Mammary epithelial cell (primary cell): ENCODE measurements at regions of chr4 and their contacts with region 1.

Region 1: GRCh38 chr4:96993560-96993959 is 1149.7 kb downstream of the STPG2 start:
- DNase-seq: no peak
- H3K4me3 ChIP-seq: no peak overlapping the region
- H3K27ac ChIP-seq: no peak overlapping the region
- H3K4me1 ChIP-seq: no peaks in the 10 kb centered on the region
- H3K27me3 ChIP-seq: no peaks in the 10 kb centered on the region
- CTCF ChIP-seq: no peak

Region 2: DNA sequence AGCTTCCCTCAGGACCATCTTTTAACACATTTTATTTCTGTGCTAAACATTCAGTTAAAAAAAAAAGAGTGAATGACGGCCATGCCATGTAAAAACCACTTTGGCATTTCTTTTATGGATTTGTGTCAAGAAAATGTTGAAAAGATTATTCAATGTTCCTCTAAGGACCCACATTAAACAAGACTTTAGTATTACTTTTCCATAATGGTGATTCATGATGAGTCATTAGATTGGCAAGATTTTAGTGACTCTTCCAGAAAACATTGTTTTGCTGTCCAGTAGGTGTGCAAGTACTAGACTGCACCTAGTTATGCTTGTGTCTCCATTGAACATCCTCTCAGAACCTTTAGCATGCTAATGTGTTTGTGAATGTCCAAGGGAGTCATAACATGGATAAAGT is 401.1 kb after region 1 on chr4:
- CTCF ChIA-PET with region 1: no interaction called
- dilution Hi-C with region 1: no loop called
- in situ Hi-C with region 1: no loop called
- intact Hi-C with region 1: no loop called
- DNase-seq: peak; percentile 55
- H3K4me3 ChIP-seq: no peak overlapping the region
- H3K27ac ChIP-seq: no peak overlapping the region
- H3K4me1 ChIP-seq: no peaks in the 10 kb centered on the region
- H3K27me3 ChIP-seq: no peaks in the 10 kb centered on the region
- CTCF ChIP-seq: no peak

Region 3: GRCh38 chr4:97548943-97549583 is 555.5 kb after region 1 on chr4:
- CTCF ChIA-PET with region 1: interaction called, 11 read pairs
- dilution Hi-C with region 1: no loop called
- in situ Hi-C with region 1: no loop called
- intact Hi-C with region 1: no loop called
- DNase-seq: peak; percentile 2
- H3K4me3 ChIP-seq: no peak overlapping the region
- H3K27ac ChIP-seq: no peak overlapping the region
- H3K4me1 ChIP-seq: no peaks in the 10 kb centered on the region
- H3K27me3 ChIP-seq: no peaks in the 10 kb centered on the region
- CTCF ChIP-seq: peak in 1 of 2 donors; percentile 48